ENCODE measurements at regions of chr12 and their contacts with region 1.

Region 1: DNA sequence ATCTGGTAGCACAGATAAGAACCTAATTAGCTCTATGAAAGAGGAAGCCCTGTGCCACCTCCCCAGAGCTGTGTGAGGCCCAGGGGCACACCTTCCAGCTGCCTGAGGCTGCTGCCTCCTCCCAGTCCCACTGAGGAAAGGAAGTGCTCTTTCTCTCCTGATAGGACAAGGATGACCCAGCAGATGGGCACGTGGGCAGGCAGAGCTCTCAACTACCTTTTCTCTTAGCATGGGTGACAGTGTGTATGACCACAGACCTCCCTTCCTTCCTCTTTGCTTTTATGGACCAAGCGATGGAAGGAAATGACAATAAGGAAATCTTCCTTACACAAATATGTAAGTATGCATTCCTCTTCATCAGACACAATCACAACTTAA is 127.6 kb upstream of the AMIGO2 start:
- DNase-seq: peak; percentile 66
- ATAC-seq: peak; percentile 87
- H3K4me3 ChIP-seq: no peak overlapping the region; the same call in 1 of the 2 replicates
- H3K27ac ChIP-seq: peak overlapping the region; percentile 66
- H3K4me1 ChIP-seq: peaks cover 21% of the 10 kb centered on the region
- H3K27me3 ChIP-seq: no peaks in the 10 kb centered on the region
- CTCF ChIP-seq: no peak
- EP300 ChIP-seq: peak in 1 of 2 experiments; percentile 17; a peak in 1 of 4 replicates
- POLR2A ChIP-seq: no peak
- RAD21 ChIP-seq: no peak

Region 2: GRCh38 chr12:47133981-47134380 is 73.3 kb before region 1 on chr12:
- CTCF ChIA-PET with region 1: no interaction called
- POLR2A ChIA-PET with region 1: no interaction called
- RAD21 ChIA-PET with region 1: no interaction called
- SMC1A ChIA-PET with region 1: no interaction called
- in situ Hi-C with region 1: no loop called
- intact Hi-C with region 1: no loop called
- DNase-seq: no peak
- ATAC-seq: no peak
- H3K4me3 ChIP-seq: no peak overlapping the region
- H3K27ac ChIP-seq: no peak overlapping the region
- H3K4me1 ChIP-seq: no peaks in the 10 kb centered on the region
- H3K27me3 ChIP-seq: no peaks in the 10 kb centered on the region
- CTCF ChIP-seq: no peak
- EP300 ChIP-seq: no peak
- POLR2A ChIP-seq: no peak
- RAD21 ChIP-seq: no peak

Region 3: DNA sequence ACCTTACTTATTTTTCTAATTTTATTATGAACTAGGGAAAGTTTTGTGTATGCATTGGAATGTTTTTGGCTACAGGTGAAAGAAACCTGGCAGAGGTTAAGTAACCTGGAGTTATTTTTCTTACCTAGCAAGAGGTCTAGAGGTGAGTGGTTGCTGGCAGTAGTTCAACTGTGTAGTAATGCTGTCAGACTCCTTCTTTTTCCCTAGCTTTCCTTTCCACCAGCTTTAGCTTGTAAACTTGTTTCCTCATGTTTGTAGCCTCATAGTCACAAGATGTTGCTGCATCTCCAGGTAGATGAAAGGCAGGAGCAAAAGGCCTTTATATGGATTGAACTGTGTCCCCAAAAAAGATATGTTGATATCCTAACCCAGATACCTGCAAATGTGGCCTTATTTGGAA is 22.5 kb before region 1 on chr12:
- CTCF ChIA-PET with region 1: no interaction called
- POLR2A ChIA-PET with region 1: interaction called, 3 read pairs
- RAD21 ChIA-PET with region 1: interaction called, 6 read pairs
- SMC1A ChIA-PET with region 1: interaction called, 12 read pairs
- in situ Hi-C with region 1: no loop called
- intact Hi-C with region 1: no loop called
- DNase-seq: no peak
- ATAC-seq: no peak
- H3K4me3 ChIP-seq: no peak overlapping the region
- H3K27ac ChIP-seq: no peak overlapping the region
- H3K4me1 ChIP-seq: peaks cover 2% of the 10 kb centered on the region
- H3K27me3 ChIP-seq: no peaks in the 10 kb centered on the region
- CTCF ChIP-seq: no peak
- EP300 ChIP-seq: no peak
- POLR2A ChIP-seq: no peak
- RAD21 ChIP-seq: no peak

Region 4: DNA sequence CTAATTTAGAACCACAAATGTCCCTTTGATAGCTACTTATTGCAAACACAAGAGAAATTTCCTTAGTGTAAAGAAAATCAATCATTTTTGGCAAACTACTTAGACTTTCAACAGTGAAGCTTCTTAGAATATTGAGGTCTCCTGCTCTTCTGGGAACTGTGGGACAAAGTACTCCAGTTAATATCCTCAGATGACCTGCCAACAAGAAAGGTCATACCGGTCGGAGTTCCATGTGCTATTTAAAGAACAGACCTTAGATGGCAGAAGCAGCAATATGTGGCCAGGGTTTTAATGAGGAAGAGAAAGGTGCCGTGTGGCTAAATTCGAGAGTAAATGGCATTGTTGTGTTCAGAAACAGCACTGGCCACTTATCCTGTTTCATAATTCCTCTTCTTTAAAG is 12.8 kb before region 1 on chr12:
- CTCF ChIA-PET with region 1: interaction called, 15 read pairs
- POLR2A ChIA-PET with region 1: interaction called, 7 read pairs
- RAD21 ChIA-PET with region 1: interaction called, 20 read pairs
- SMC1A ChIA-PET with region 1: interaction called, 32 read pairs
- in situ Hi-C with region 1: no loop called
- intact Hi-C with region 1: no loop called
- DNase-seq: no peak
- ATAC-seq: peak; percentile 65
- H3K4me3 ChIP-seq: no peak overlapping the region
- H3K27ac ChIP-seq: no peak overlapping the region
- H3K4me1 ChIP-seq: peaks cover 19% of the 10 kb centered on the region
- H3K27me3 ChIP-seq: no peaks in the 10 kb centered on the region
- CTCF ChIP-seq: no peak; a peak in 1 of 6 replicates
- EP300 ChIP-seq: no peak
- POLR2A ChIP-seq: no peak
- RAD21 ChIP-seq: no peak

Region 5: DNA sequence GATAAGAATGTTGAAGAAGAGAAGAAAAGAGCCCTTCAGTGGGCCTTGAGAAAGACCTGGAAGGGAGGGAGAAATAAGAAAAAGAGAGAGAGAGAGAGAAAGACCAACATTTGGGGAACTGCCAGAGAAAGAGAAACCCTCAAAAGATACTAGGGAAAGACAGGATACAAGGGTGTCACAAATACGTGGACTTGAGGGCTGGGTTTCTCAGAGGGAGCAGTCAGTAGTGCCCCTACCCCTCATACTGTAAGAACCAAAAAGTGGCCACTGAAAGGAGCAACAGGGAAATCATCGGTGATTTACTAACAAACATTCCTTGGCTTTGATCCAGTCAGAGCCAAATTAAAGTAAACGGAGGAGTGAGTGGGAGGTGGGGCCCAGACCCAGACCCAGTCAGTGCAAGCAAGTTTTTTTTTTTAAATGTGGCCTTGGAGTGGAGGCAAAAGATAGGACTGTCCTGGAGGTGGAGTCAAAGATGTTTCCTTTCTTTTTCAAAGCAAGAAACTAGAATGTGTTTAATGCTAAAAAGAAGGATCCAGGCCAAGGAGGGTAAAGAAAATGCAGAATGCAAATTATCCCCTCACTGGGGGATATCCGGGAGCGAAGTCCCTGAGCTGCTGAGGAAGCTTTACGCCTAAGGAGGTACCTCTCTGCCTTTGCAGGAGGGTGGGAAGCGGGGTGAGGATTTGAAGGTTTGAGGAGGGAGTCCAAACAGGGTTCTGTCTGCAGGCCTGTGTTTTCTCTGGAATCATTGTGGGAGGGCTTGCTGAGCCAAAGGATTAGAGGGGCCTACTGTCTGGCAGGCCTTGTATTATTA is 15.9 kb after region 1 on chr12:
- CTCF ChIA-PET with region 1: interaction called, 15 read pairs
- POLR2A ChIA-PET with region 1: interaction called, 36 read pairs
- RAD21 ChIA-PET with region 1: interaction called, 98 read pairs
- SMC1A ChIA-PET with region 1: interaction called, 54 read pairs
- in situ Hi-C with region 1: no loop called
- intact Hi-C with region 1: no loop called
- DNase-seq: no peak
- ATAC-seq: peak; percentile 17
- H3K4me3 ChIP-seq: no peak overlapping the region
- H3K27ac ChIP-seq: no peak overlapping the region
- H3K4me1 ChIP-seq: peaks cover under 1% of the 10 kb centered on the region; the same call in 1 of the 2 replicates
- H3K27me3 ChIP-seq: no peaks in the 10 kb centered on the region
- CTCF ChIP-seq: no peak
- EP300 ChIP-seq: no peak
- POLR2A ChIP-seq: no peak
- RAD21 ChIP-seq: no peak

Region 6: DNA sequence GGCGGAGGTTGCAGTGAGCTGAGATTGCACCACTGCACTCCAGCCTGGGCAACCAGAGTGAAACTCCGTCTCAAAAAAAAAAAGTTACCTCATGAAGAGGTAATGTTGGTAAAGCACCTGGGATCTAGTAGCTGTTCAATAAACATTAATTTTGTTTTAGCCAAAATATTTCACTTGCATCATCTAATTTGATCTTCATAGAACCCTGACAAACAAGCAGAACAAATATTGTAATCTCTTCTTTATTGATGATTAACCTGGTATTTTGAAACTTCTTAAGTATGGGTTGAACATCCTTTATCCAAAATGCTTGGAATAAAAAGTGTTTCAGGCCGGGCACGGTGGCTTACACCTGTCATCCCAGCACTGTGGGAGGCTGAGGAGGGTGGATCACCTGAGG is 21.5 kb after region 1 on chr12:
- CTCF ChIA-PET with region 1: interaction called, 4 read pairs
- POLR2A ChIA-PET with region 1: interaction called, 4 read pairs
- RAD21 ChIA-PET with region 1: interaction called, 15 read pairs
- SMC1A ChIA-PET with region 1: interaction called, 27 read pairs
- in situ Hi-C with region 1: no loop called
- intact Hi-C with region 1: no loop called
- DNase-seq: no peak
- ATAC-seq: no peak
- H3K4me3 ChIP-seq: no peak overlapping the region
- H3K27ac ChIP-seq: no peak overlapping the region
- H3K4me1 ChIP-seq: no peaks in the 10 kb centered on the region
- H3K27me3 ChIP-seq: no peaks in the 10 kb centered on the region
- CTCF ChIP-seq: no peak
- EP300 ChIP-seq: no peak
- POLR2A ChIP-seq: no peak
- RAD21 ChIP-seq: no peak

Region 7: GRCh38 chr12:47243454-47243853 is 36.1 kb after region 1 on chr12:
- CTCF ChIA-PET with region 1: no interaction called
- POLR2A ChIA-PET with region 1: no interaction called
- RAD21 ChIA-PET with region 1: no interaction called
- SMC1A ChIA-PET with region 1: no interaction called
- in situ Hi-C with region 1: no loop called
- intact Hi-C with region 1: no loop called
- DNase-seq: no peak
- ATAC-seq: no peak
- H3K4me3 ChIP-seq: no peak overlapping the region
- H3K27ac ChIP-seq: no peak overlapping the region
- H3K4me1 ChIP-seq: no peaks in the 10 kb centered on the region
- H3K27me3 ChIP-seq: no peaks in the 10 kb centered on the region
- CTCF ChIP-seq: no peak
- EP300 ChIP-seq: no peak
- POLR2A ChIP-seq: no peak
- RAD21 ChIP-seq: no peak

Region 8: DNA sequence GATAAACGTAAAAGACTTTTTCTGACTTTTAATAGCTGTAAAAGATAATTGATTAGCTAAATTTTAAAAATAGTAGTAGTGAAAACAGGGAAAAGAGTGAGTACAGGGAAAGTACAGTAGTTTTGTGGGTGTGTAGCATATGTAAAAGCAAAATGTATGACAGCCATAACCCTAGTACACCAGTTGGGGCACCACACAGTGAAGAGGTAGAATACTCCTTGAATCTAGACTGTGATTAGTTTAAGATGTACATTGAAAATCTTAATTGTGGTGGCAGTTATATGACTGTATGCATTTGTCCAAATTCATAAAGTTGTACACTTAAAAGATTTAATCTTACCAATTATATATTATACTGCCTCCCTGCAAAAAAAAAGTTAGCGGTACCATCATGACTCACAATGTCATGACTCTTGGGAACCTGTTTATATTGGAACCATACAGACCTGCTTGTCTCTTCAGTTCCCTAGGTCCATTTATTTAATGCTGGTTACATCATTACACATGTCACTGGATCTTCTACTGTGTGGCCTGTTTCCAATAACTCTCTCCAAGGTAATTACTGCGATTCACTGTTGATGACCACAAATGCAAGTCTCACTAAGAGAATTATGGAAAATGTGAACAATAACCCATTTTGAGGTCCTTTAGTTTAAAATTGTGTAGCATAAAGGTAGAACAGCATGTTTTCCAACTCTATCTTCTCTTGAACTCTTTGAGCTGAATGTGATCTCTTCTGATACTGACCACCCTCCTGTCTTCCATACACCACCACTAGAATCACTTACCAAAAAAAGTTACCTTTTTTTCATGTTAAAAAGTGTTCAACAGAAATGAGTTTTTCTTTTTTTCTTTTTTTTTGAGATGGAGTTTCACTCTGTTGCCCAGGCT is 136.6 kb after region 1 on chr12:
- CTCF ChIA-PET with region 1: no interaction called
- POLR2A ChIA-PET with region 1: no interaction called
- RAD21 ChIA-PET with region 1: no interaction called
- SMC1A ChIA-PET with region 1: no interaction called
- in situ Hi-C with region 1: no loop called
- intact Hi-C with region 1: no loop called
- DNase-seq: no peak
- ATAC-seq: no peak
- H3K4me3 ChIP-seq: no peak overlapping the region
- H3K27ac ChIP-seq: no peak overlapping the region
- H3K4me1 ChIP-seq: no peaks in the 10 kb centered on the region
- H3K27me3 ChIP-seq: no peaks in the 10 kb centered on the region; a peak in 1 of 4 replicates
- CTCF ChIP-seq: no peak
- EP300 ChIP-seq: no peak
- POLR2A ChIP-seq: no peak
- RAD21 ChIP-seq: no peak